A673 (cell line): ENCODE measurements at regions of chr4 and their contacts with region 1.

Region 1: DNA sequence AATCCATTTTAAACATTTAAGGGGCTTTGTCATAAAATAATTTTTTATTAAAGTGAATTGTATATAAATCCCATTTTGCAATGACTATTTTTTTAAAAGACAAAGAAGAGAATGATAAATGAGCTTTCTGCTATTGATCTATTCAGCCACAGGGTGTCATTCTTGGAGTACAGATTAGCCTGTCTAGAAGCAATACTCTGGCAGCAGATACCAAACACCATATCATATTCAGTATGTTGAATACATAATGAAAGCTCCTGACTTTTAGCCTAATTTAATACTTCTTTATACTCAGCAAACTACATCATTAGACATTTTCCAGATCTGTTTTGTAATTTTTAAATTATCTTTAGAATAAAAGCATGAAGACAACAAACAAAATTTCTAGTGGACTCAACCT is 496.3 kb downstream of the PDGFC start:
- DNase-seq: peak; percentile 80
- H3K4me3 ChIP-seq: no peak overlapping the region
- H3K27ac ChIP-seq: peak overlapping the region; percentile 57
- H3K4me1 ChIP-seq: peaks cover 14% of the 10 kb centered on the region
- H3K27me3 ChIP-seq: no peaks in the 10 kb centered on the region
- CTCF ChIP-seq: peak; percentile 68

Region 2: DNA sequence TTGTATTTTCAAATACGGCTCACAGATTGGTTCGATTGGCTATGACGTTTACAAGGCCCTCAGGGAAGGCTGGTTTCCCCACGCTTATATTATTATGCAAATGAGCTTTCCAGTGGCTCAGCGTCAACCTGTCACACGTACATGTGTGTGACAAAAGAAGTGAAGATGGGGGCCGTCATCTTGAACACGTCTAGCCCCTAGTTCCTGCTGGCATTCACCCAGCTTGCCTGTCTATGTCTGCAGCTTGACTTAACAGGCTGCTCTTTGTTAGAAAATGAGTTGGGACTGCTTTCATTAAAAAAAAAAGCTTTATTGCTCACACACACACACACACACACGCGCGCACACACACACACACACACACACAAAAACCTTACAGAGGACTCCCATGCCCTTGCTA is 238.1 kb before region 1 on chr4:
- CTCF ChIA-PET with region 1: no interaction called
- POLR2A ChIA-PET with region 1: no interaction called
- intact Hi-C with region 1: no loop called
- DNase-seq: peak; percentile 8
- H3K4me3 ChIP-seq: no peak overlapping the region
- H3K27ac ChIP-seq: no peak overlapping the region
- H3K4me1 ChIP-seq: peaks cover 3% of the 10 kb centered on the region
- H3K27me3 ChIP-seq: no peaks in the 10 kb centered on the region
- CTCF ChIP-seq: no peak

Region 3: DNA sequence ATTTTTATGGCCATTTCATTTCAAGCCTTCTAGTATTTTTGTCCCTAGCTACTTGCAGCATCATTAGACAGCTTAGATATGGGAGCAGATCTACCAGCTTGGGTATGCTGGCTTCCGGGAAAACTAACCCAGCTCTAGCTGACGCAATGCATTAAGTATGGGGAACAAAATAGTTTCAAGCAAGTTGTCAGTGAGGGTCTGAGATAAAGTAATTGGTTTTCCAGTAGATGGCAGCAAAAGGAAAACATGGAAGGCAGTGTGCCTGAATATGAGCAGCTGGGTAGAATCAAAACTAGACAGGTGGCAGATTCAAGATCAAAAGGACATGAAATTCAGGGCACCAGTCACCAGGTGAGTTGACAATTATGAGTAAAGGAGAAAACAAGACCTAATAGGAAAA is 180.7 kb before region 1 on chr4:
- CTCF ChIA-PET with region 1: interaction called, 6 read pairs
- POLR2A ChIA-PET with region 1: no interaction called
- intact Hi-C with region 1: loop called (anchors 5 kb)
- DNase-seq: peak; percentile 93
- H3K4me3 ChIP-seq: no peak overlapping the region
- H3K27ac ChIP-seq: peak overlapping the region; percentile 74
- H3K4me1 ChIP-seq: peaks cover 40% of the 10 kb centered on the region
- H3K27me3 ChIP-seq: no peaks in the 10 kb centered on the region
- CTCF ChIP-seq: peak; percentile 74

Region 4: GRCh38 chr4:156413239-156414135 is 61.8 kb before region 1 on chr4:
- CTCF ChIA-PET with region 1: no interaction called
- POLR2A ChIA-PET with region 1: no interaction called
- intact Hi-C with region 1: no loop called
- DNase-seq: no peak
- H3K4me3 ChIP-seq: no peak overlapping the region
- H3K27ac ChIP-seq: no peak overlapping the region
- H3K4me1 ChIP-seq: peaks cover 19% of the 10 kb centered on the region
- H3K27me3 ChIP-seq: no peaks in the 10 kb centered on the region
- CTCF ChIP-seq: no peak

Region 5: GRCh38 chr4:156594624-156595023 is 119.3 kb after region 1 on chr4:
- CTCF ChIA-PET with region 1: no interaction called
- POLR2A ChIA-PET with region 1: no interaction called
- intact Hi-C with region 1: loop called (anchors 5 kb)
- DNase-seq: peak; percentile 77
- H3K4me3 ChIP-seq: no peak overlapping the region
- H3K27ac ChIP-seq: no peak overlapping the region
- H3K4me1 ChIP-seq: peaks cover 52% of the 10 kb centered on the region
- H3K27me3 ChIP-seq: no peaks in the 10 kb centered on the region
- CTCF ChIP-seq: no peak

Region 6: DNA sequence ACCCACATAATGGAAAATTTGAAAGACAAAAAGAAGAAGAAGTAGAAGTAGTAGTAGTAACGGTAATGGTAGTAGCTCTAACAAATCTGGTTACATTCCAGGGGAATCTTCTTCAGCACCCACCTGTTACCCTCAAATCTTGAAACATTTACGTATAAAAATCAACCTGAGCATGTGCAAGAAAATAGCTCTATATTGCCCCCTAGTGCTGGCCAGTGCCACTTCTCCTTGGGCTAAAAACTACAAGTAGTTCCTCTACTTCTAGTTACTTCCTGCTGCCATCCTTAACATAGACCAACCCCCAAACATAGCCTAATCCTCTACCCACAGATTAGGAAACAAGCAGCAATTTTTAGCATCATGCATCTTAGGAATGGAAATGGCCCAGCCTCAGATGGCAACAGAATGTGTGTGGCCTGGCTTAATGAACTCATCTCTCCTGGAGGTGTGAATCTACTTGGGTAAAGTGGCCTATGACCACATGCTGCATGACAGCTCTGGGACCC is 493.2 kb after region 1 on chr4:
- CTCF ChIA-PET with region 1: interaction called, 10 read pairs
- POLR2A ChIA-PET with region 1: no interaction called
- intact Hi-C with region 1: loop called (anchors 2 kb)
- DNase-seq: peak; percentile 90
- H3K4me3 ChIP-seq: peak overlapping the region; percentile 82
- H3K27ac ChIP-seq: peak overlapping the region; percentile 83
- H3K4me1 ChIP-seq: peaks cover 23% of the 10 kb centered on the region
- H3K27me3 ChIP-seq: no peaks in the 10 kb centered on the region
- CTCF ChIP-seq: peak; percentile 94

Region 7: GRCh38 chr4:157057218-157057617 is 581.9 kb after region 1 on chr4:
- CTCF ChIA-PET with region 1: no interaction called
- POLR2A ChIA-PET with region 1: no interaction called
- intact Hi-C with region 1: loop called (anchors 5 kb)
- DNase-seq: peak; percentile 45
- H3K4me3 ChIP-seq: no peak overlapping the region
- H3K27ac ChIP-seq: no peak overlapping the region
- H3K4me1 ChIP-seq: peaks cover 4% of the 10 kb centered on the region
- H3K27me3 ChIP-seq: no peaks in the 10 kb centered on the region
- CTCF ChIP-seq: no peak

Region 8: GRCh38 chr4:157978680-157979361 is 1503.5 kb after region 1 on chr4:
- CTCF ChIA-PET with region 1: no interaction called
- POLR2A ChIA-PET with region 1: no interaction called
- intact Hi-C with region 1: loop called (anchors 2 kb)
- DNase-seq: peak; percentile 89
- H3K4me3 ChIP-seq: peak overlapping the region; percentile 23
- H3K27ac ChIP-seq: no peak overlapping the region
- H3K4me1 ChIP-seq: peaks cover 22% of the 10 kb centered on the region
- H3K27me3 ChIP-seq: no peaks in the 10 kb centered on the region
- CTCF ChIP-seq: peak; percentile 85